ENCODE measurements at regions of chr6 and their contacts with region 1.

Region 1: DNA sequence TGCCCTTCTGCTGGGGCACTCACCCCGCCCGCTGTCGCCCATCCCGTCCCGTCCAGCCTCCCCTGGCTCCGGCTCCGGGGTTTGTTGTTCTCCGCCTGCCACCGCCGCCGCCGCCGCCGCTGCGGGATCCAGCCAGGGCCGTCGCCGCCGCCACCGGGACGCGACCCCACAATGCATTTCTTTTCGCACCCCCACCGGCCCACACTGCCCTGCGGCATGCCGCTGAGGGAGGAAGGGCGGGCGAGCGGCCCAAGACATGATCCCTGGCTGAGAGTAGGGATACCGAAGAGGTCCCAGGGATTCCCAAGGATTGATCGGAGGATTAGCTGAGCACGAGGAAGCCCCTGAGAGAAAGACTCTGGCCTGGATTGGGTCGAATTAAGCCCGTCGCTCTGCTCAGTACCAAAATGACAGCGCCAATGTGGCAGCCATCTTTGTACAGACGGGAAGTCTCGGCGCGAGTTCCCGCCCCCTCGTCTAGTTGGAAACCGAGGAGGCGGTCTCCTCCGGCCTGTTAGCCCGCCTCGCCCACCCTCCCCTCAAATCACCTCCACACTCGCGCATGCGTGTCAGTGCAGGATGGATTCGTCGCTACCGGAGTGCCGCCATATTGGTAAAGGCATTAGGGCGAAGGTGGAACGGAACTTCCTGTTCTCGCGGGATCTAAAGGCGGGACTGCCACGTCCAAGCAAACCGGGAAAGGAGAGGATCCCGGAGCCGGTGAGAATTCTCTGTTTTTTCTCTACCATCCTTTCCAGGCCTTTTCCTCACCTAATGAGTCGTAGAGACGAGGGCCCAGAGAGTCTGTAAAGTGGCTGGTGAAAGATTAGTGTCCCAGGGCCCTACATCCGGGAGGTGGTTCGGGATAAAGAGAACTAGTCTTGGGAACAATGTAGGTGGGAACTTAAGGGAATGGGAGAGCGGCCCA is at the starts of genes RXRB and SLC39A7:
- DNase-seq: peak; percentile 99
- H3K4me3 Mint-ChIP-seq: peak within 1 kb of the TSS; percentile 100
- H3K27ac Mint-ChIP-seq: peak within 1 kb of the TSS; percentile 97
- H3K4me1 Mint-ChIP-seq: peaks cover 62% of the 10 kb centered on the region
- H3K27me3 Mint-ChIP-seq: no peaks in the 10 kb centered on the region
- total RNA-seq, gene RXRB: 46.6 and 48.0 TPM in 2 replicates
- total RNA-seq, gene SLC39A7: 61.7 and 63.9 TPM in 2 replicates

Region 2: GRCh38 chr6:32177788-32178546 is 1022.5 kb before region 1 on chr6 and contains the start of gene RNF5:
- intact Hi-C with region 1: loop called (anchors 10 kb)
- DNase-seq: peak; percentile 98
- H3K4me3 Mint-ChIP-seq: peak within 1 kb of the TSS; percentile 86
- H3K27ac Mint-ChIP-seq: peak within 1 kb of the TSS; percentile 95
- H3K4me1 Mint-ChIP-seq: peaks cover 59% of the 10 kb centered on the region
- H3K27me3 Mint-ChIP-seq: no peaks in the 10 kb centered on the region
- total RNA-seq, gene RNF5: 59.9 and 62.6 TPM in 2 replicates

Region 3: DNA sequence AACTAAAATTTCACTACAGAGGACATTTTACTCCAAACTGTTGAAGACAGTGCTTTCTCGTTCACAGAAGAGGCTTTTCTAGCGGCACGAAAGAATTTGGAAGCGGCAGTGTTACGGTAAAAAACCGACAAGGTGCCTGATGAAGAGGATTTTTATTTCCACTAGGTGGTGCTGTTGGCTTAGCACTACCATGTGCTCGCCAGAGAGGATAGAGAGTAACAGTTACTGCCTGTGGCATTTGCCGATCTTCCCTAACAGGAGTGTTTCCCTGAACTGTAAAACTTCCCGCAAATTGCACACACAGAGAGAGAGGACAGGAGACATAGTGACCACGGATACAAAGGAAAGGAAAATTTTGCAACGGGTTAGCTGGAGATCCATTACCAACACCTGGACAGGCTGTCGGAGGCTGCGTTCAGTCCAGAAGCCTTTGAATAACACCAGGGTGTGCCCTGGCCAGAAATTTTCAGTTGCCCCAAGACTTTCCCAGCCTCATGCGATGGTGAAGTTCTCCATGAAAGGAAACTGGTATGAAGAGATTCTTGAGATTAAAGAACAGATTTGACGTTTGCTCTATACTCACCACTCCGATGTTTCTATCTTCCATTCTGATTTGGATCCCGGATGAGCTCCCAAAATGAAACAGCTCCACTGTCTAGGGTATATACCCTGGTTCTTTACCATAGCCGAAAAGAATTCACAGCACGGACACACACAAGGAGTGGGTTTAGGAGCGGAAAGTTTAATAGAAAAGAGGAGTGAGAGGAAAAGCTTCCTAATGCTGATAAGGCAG is 76.6 kb before region 1 on chr6:
- intact Hi-C with region 1: loop called (anchors 5 kb)
- DNase-seq: peak; percentile 80
- H3K4me3 Mint-ChIP-seq: no peak overlapping the region
- H3K27ac Mint-ChIP-seq: no peak overlapping the region
- H3K4me1 Mint-ChIP-seq: peaks cover 11% of the 10 kb centered on the region
- H3K27me3 Mint-ChIP-seq: peaks cover 26% of the 10 kb centered on the region

Region 4: GRCh38 chr6:33189625-33190448 is 10.6 kb before region 1 on chr6:
- intact Hi-C with region 1: no loop called
- DNase-seq: no peak
- H3K4me3 Mint-ChIP-seq: no peak overlapping the region
- H3K27ac Mint-ChIP-seq: no peak overlapping the region
- H3K4me1 Mint-ChIP-seq: peaks cover 18% of the 10 kb centered on the region
- H3K27me3 Mint-ChIP-seq: peaks cover 50% of the 10 kb centered on the region

Region 5: GRCh38 chr6:33271458-33272274 is 71.2 kb after region 1 on chr6 and contains the starts of genes RPS18 and VPS52:
- intact Hi-C with region 1: loop called (anchors 1 kb)
- DNase-seq: peak; percentile 97
- H3K4me3 Mint-ChIP-seq: peak within 1 kb of the TSS; percentile 94
- H3K27ac Mint-ChIP-seq: peak within 1 kb of the TSS; percentile 98
- H3K4me1 Mint-ChIP-seq: peaks cover 54% of the 10 kb centered on the region
- H3K27me3 Mint-ChIP-seq: no peaks in the 10 kb centered on the region
- total RNA-seq, gene RPS18: 3,200 and 3,212 TPM in 2 replicates
- total RNA-seq, gene VPS52: 59.9 and 64.9 TPM in 2 replicates

Region 6: DNA sequence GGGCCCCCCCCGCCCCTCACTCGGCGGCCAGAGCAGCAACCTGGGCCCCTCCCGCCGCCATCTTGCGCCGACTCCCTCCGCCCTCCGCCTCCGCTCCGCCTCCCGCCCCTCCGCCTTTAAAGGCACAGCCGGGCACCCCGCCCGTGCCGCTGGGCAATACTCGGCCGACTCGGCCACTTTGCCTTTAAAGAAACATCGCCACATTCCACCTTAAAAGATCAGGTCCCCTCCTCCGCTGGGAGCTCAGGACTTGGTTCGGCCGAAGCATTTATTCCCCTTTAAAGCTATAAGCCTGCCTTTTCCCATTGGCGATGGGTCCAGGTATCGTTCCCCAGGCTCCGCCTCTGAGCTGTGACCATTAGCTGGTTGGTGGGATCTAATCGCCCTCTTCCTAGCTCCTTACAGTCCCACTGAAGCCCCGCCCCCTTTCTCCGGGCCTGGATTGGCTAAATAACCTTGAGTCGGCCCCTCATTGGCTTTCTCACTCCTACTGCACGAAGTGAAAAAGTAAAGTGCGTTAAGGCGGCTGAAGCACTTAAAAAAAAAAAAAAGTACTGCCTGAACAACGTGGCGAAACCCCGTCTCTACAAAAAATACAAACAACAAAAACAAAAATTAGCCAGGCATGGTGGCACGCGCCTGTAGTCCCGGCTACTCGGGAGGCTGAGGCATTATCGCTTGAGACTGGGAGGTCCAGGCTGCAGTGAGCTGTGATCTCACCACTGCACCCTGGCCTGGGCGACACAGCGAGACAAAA is 117.4 kb after region 1 on chr6 and contains the start of gene ZBTB22:
- intact Hi-C with region 1: loop called (anchors 2 kb)
- DNase-seq: peak; percentile 98
- H3K4me3 Mint-ChIP-seq: peak within 1 kb of the TSS; percentile 96
- H3K27ac Mint-ChIP-seq: peak within 1 kb of the TSS; percentile 96
- H3K4me1 Mint-ChIP-seq: peaks cover 53% of the 10 kb centered on the region
- H3K27me3 Mint-ChIP-seq: no peaks in the 10 kb centered on the region
- total RNA-seq, gene ZBTB22: 11.3 and 14.3 TPM in 2 replicates

Region 7: GRCh38 chr6:33740204-33740608 is 539.7 kb after region 1 on chr6:
- intact Hi-C with region 1: no loop called
- DNase-seq: no peak
- H3K4me3 Mint-ChIP-seq: no peak overlapping the region
- H3K27ac Mint-ChIP-seq: no peak overlapping the region
- H3K4me1 Mint-ChIP-seq: peaks cover 3% of the 10 kb centered on the region
- H3K27me3 Mint-ChIP-seq: peaks cover 13% of the 10 kb centered on the region

Measured in activated CD4-positive, alpha-beta T cell treated with anti-CD3 and anti-CD28 coated beads, Interleukin-2, amount 10 ng/mL, durations not matched to agents 24 days and 14 days (primary cell).